ENCODE measurements at regions of chr12 and their contacts with region 1.

Region 1: DNA sequence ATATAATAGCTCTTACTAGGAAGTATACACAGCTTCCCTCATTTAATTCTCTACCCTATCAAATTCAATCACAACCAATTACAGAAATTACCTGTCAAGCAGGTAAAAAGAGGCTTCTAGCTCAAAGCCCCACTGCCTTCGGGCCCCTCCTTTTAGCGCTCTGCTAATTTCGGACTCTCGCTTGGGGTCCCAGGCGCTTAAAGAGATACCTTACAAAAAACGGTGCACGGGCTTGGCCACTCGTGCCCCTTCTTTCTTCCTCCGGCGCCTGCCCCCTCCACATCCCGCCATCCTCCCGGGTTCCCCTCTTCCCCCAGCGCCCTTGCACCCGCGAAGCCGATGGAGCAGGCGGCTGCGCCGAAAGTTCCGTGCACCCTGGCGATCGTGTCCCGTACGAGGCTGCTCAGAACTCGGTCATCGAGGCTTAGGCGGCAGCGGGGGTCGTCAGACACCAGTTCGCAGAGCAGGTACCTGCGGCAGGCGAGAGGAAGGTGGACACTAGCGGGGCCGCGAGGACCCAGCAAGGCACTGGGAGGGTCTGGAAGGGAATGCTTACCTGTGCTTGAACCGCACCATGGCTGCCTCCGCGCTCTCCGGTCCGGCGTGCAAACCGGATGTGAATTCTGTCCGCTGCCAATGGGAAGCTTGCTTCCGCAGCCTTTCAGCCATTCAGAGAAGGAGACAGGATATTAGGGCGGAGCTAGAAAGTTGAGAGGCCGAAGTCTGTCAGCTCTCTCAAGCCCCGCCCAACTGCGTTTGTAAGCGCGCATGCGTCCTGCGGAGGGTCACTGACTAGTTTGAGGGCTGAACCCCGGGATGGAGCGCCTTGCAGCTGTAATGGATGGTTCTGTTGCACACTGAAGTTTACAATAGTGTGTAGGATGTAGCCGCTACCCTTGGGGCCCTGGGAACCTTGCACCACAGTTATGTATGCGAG is at the start of gene POP5:
- DNase-seq: peak; percentile 98
- ATAC-seq: peak; percentile 93
- H3K4me3 ChIP-seq: peak within 1 kb of the TSS; percentile 80 to 92 (median 91)
- H3K27ac ChIP-seq: peak within 1 kb of the TSS; percentile 41
- H3K4me1 ChIP-seq: peaks cover 36% of the 10 kb centered on the region
- H3K27me3 ChIP-seq: peaks cover 2 to 17% of the 10 kb centered on the region in 2 experiments; a peak in 4 of 5 replicates
- CTCF ChIP-seq: peak; percentile 7; the same call in 1 of the 2 replicates
- EP300 ChIP-seq: no peak
- POLR2A ChIP-seq: peak; percentile 89 to 93
- RAD21 ChIP-seq: peak; percentile 16; the same call in 1 of the 2 replicates
- total RNA-seq, gene POP5: 54.3 and 61.3 TPM in 2 replicates

Region 2: GRCh38 chr12:120495723-120496412 is 85.2 kb before region 1 on chr12 and contains the start of gene DYNLL1:
- CTCF ChIA-PET with region 1: no interaction called
- POLR2A ChIA-PET with region 1: interaction called, 15 read pairs
- in situ Hi-C with region 1: no loop called
- intact Hi-C with region 1: no loop called
- DNase-seq: peak; percentile 93
- ATAC-seq: peak; percentile 94
- H3K4me3 ChIP-seq: peak within 1 kb of the TSS; percentile 95 to 100 (median 97)
- H3K27ac ChIP-seq: peak within 1 kb of the TSS; percentile 69
- H3K4me1 ChIP-seq: peaks cover 28% of the 10 kb centered on the region
- H3K27me3 ChIP-seq: no peaks in the 10 kb centered on the region; a peak in 1 of 5 replicates
- CTCF ChIP-seq: no peak; the same call in 1 of the 2 replicates
- EP300 ChIP-seq: peak in 1 of 2 experiments; percentile 55; a peak in 3 of 4 replicates
- POLR2A ChIP-seq: peak; percentile 95 to 100
- RAD21 ChIP-seq: peak; percentile 6; the same call in 1 of the 2 replicates
- total RNA-seq, gene DYNLL1: 271 and 403 TPM in 2 replicates

Region 3: DNA sequence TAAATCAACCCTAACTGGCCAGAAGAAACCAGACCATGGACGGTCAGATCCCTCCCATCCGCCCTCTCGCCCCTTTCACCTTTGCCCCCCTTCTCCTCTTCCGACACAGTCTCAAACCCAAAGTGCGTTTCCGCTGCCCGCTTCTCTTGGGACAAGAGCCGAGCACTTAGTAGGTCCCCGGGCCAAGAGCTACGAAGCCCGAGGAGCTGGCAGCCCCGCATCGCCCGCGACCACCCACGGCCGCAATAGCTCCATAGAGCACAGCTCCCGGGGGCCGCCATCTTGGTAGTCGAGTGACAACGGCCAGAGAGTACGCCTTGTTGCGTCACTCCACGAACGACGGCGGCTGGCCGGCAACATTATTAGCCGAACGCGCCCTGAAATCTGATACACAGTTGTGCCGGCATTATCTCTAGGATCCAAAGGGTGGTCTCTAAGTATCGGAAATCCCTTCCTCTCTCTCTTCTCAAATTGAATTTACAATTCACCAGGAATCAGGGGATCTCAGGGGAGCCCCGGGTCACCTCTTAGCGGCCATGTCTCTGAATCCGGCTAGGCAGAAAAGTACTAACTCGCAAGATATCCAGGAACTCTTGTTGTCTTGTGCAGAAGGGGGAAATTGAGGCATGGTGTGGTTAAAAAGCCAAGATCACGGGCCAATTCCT is 52.1 kb before region 1 on chr12 and contains the start of gene COQ5:
- CTCF ChIA-PET with region 1: no interaction called
- POLR2A ChIA-PET with region 1: interaction called, 24 read pairs
- in situ Hi-C with region 1: no loop called
- intact Hi-C with region 1: no loop called
- DNase-seq: peak; percentile 80
- ATAC-seq: peak; percentile 92
- H3K4me3 ChIP-seq: peak within 1 kb of the TSS; percentile 72 to 95 (median 82)
- H3K27ac ChIP-seq: peak within 1 kb of the TSS; percentile 97
- H3K4me1 ChIP-seq: no peaks in the 10 kb centered on the region
- H3K27me3 ChIP-seq: no peaks in the 10 kb centered on the region
- CTCF ChIP-seq: 0 out of 2 replicates have a peak, but pooled peaks have one; percentile 5
- EP300 ChIP-seq: no peak
- POLR2A ChIP-seq: peak; percentile 85 to 86
- RAD21 ChIP-seq: no peak
- total RNA-seq, gene COQ5: 41.5 and 59.8 TPM in 2 replicates

Region 4: GRCh38 chr12:120649442-120650232 is 68.6 kb after region 1 on chr12:
- CTCF ChIA-PET with region 1: interaction called, 18 read pairs
- POLR2A ChIA-PET with region 1: interaction called, 8 read pairs
- in situ Hi-C with region 1: loop called (anchors 5 kb)
- intact Hi-C with region 1: loop called (anchors 1 kb)
- DNase-seq: no peak
- ATAC-seq: no peak
- H3K4me3 ChIP-seq: peak overlapping the region in 1 of 3 experiments; percentile 60; a peak in 1 of 6 replicates
- H3K27ac ChIP-seq: no peak overlapping the region
- H3K4me1 ChIP-seq: peaks cover 13% of the 10 kb centered on the region
- H3K27me3 ChIP-seq: peaks cover 5 to 73% of the 10 kb centered on the region in 2 experiments; a peak in 4 of 5 replicates
- CTCF ChIP-seq: no peak
- EP300 ChIP-seq: no peak
- POLR2A ChIP-seq: no peak
- RAD21 ChIP-seq: no peak

Region 5: DNA sequence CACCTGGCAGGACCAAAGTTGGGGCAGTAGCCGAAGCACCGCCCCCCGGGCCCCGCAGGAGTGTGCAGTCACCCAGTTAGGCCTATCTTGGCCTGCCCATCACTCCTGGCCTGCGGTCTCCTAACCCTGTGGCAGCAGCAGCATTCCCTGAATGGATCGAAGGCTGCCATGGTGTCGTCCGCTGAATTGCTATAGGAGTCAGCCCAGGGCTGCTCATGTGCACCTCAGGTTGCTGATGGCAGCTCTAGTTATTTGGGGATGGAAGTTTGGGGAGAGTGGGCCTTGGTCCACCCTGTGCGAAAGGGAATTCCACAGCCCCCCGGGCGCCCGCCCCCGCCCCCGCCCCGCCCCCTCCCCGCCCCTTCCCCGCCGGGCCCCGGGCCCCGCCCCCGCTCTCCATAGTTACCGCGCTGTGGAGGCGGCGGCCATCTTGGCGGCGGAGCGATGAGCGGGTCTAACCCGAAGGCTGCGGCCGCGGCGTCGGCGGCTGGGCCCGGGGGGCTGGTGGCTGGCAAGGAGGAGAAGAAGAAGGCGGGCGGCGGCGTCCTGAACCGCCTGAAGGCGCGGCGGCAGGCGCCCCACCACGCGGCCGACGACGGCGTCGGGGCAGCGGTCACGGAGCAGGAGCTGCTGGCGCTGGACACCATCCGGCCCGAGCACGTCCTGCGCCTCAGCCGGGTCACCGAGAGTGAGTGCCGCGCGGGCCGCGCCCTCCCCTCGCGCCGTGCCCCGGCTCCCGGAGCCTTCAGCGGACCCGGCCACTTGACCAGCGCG is 129.2 kb after region 1 on chr12 and contains the start of gene UNC119B:
- CTCF ChIA-PET with region 1: interaction called, 21 read pairs
- POLR2A ChIA-PET with region 1: interaction called, 7 read pairs
- in situ Hi-C with region 1: loop called (anchors 5 kb)
- intact Hi-C with region 1: loop called (anchors 2 kb)
- DNase-seq: no peak
- ATAC-seq: peak; percentile 85
- H3K4me3 ChIP-seq: peak within 1 kb of the TSS; percentile 84 to 85 (median 84)
- H3K27ac ChIP-seq: peak within 1 kb of the TSS; percentile 59
- H3K4me1 ChIP-seq: peaks cover 34% of the 10 kb centered on the region
- H3K27me3 ChIP-seq: no peaks in the 10 kb centered on the region
- CTCF ChIP-seq: no peak
- EP300 ChIP-seq: no peak
- POLR2A ChIP-seq: peak; percentile 22 to 75; a peak in 3 of 4 replicates
- RAD21 ChIP-seq: no peak
- total RNA-seq, gene UNC119B: 19.6 and 30.7 TPM in 2 replicates

Region 6: GRCh38 chr12:120971299-120972179 is 390.5 kb after region 1 on chr12:
- CTCF ChIA-PET with region 1: no interaction called
- POLR2A ChIA-PET with region 1: no interaction called
- in situ Hi-C with region 1: no loop called
- intact Hi-C with region 1: loop called (anchors 5 kb)
- DNase-seq: peak; percentile 45
- ATAC-seq: peak; percentile 34
- H3K4me3 ChIP-seq: no peak overlapping the region
- H3K27ac ChIP-seq: no peak overlapping the region
- H3K4me1 ChIP-seq: peaks cover 41% of the 10 kb centered on the region
- H3K27me3 ChIP-seq: no peaks in the 10 kb centered on the region
- CTCF ChIP-seq: peak; percentile 74
- EP300 ChIP-seq: no peak
- POLR2A ChIP-seq: no peak
- RAD21 ChIP-seq: peak; percentile 59; the same call in 1 of the 2 replicates

Measured in HepG2 (cell line).